Motor neuron (in vitro differentiated cells): ENCODE measurements at regions of chr1 and their contacts with region 1.

Region 1: DNA sequence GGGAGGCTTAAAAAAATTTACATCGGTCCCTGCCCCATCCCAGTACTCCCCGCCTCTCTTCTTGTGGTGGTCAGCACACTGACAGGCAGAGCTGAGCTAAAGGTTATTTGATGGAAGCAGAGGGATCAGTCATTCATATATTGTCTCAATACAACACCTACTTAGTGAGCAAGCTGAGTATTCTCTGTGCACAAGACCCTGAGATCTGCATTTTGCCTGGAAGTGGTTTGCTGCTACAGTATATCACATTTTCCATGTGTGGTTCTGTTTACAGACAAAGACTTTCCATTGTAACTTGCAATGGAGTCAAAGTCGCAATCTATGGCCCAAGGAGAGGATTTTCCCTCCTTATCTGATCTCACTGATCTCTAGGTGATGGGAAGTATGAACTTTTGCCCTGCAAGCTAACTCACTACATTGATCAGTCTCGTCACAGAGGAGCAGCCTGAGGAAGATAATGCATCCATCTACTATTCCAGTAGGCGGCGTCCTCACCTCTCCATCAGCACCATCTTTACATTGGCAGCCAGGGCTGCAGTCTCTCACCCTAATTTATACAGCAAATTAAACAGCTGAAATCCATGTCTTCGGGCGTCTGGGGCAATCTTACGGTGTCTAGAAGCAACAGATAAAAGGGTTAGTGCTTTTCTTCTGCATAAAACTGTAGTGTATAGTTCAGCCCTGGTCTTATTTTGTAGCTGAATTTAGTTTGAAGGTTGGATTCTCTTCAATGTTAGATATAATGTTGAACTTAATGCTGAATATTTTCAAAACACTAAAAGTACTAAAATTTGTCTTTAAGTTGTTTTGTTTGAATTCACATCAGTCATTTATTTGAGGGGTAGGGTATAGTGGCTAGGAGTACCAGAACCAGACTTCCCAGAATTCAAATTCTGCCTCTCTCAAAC is 3.2 kb upstream of the TRAF5 start:
- ATAC-seq: peak; percentile 46 to 73 (median 61)
- H3K4me3 ChIP-seq: no peak overlapping the region
- H3K27ac ChIP-seq: no peak overlapping the region
- H3K4me1 ChIP-seq: peaks cover 2 to 12% of the 10 kb centered on the region in 2 donors

Region 2: GRCh38 chr1:211476200-211476849 is 152.9 kb after region 1 on chr1:
- in situ Hi-C with region 1: loop called in 1 of 9 experiments (anchors 25 kb)
- ATAC-seq: peak in 3 of 8 experiments; percentile 66 to 86 (median 69)
- H3K4me3 ChIP-seq: no peak overlapping the region
- H3K27ac ChIP-seq: no peak overlapping the region
- H3K4me1 ChIP-seq: no peaks in the 10 kb centered on the region

Region 3: GRCh38 chr1:211514030-211514754 is 190.8 kb after region 1 on chr1:
- in situ Hi-C with region 1: loop called in 1 of 9 experiments (anchors 25 kb)
- ATAC-seq: peak; percentile 69 to 88 (median 77)
- H3K4me3 ChIP-seq: no peak overlapping the region
- H3K27ac ChIP-seq: no peak overlapping the region
- H3K4me1 ChIP-seq: peaks cover 0 to 5% of the 10 kb centered on the region in 2 donors